Activated T-helper 1 cell treated with anti-CD3 and anti-CD28 coated beads, Interleukin-12 subunit alpha, Interleukin-12 subunit beta, Interleukin-2, Interleukin-4 antibody, amounts not matched to agents 30 ng/mL and 10 ng/mL and 1 ng/mL, durations not matched to agents 14 hours and 24 hours and 36 hours (primary cell): ENCODE measurements at regions of chr2 and their contacts with region 1.

Region 1: DNA sequence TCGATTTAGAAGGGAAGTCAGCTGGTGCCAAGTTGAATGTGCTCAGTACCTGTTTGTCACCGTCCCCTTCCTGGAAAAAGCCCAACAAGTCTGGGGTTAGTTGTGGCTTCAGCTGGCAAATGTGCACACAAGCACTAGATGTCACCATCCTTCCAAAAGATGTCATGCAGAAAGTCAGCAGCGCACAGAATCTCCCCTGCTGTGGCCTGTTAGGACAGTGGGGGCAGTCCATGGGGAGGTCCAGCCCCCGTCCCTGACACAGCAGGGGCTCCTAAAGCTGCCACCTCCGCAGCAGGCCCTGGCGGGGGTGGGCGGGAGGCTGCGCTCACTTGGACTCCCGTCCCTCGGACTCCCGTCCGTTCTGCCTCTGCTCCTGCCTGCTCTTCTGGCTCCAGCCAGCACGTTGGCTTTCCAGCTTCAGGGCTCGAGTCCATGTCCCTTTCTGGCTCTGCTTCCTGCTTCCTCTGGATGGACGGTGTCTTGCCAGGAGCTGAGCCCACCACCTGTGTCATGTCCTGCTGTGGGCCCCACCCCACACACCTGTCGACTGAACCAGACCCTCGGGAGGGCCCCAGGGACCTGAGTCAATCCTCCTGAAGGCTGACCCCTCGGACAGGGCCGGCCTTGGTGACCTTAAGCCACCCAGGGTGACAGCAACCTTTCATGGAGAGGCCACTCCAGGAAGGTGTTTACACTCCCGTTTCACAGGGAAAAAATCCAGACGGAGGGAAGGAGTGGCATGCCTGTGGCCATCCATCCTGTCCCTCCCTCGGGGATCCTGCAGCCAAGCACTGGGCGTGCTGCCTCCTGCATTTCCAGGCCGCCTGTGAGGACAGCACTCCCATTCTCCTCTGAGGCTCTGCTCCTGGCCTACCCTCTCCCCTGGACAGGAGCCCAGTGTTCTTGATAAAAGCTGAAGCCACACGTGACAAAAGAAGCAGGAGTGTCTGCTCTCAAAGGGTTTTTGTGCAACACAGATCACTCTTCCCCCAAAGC is 8.5 kb downstream of the RAB17 start:
- DNase-seq: no peak
- H3K4me3 Mint-ChIP-seq: no peak overlapping the region
- H3K27ac Mint-ChIP-seq: no peak overlapping the region
- H3K4me1 Mint-ChIP-seq: no peaks in the 10 kb centered on the region
- H3K27me3 Mint-ChIP-seq: peaks cover 4% of the 10 kb centered on the region

Region 2: DNA sequence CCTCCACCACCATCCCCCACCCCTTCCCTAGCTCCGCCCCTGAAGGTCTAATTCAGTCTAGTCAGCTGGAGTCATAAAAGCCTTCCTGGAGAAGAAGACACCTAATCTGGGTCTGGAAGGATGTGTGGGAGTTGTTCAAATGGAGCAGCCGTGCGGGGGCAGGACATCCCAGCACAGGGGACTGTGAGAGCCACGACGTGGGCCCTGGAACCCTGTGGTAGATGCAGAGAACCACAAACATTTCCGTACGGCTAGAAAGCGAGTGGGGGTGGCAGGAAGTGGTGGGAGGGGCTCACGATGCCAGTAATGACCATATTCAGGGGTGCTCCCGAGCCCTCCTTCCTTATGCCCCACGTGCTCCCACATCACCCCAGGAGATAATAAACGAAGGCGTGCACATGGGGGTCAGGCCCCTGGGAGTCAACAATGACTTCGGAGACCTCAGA is 147.2 kb before region 1 on chr2:
- intact Hi-C with region 1: no loop called
- DNase-seq: peak; percentile 62
- H3K4me3 Mint-ChIP-seq: peak overlapping the region; percentile 82
- H3K27ac Mint-ChIP-seq: peak overlapping the region; percentile 91
- H3K4me1 Mint-ChIP-seq: peaks cover 91% of the 10 kb centered on the region
- H3K27me3 Mint-ChIP-seq: peaks cover 5% of the 10 kb centered on the region

Region 3: GRCh38 chr2:237774802-237775553 is 192.9 kb after region 1 on chr2:
- intact Hi-C with region 1: loop called (anchors 1 kb)
- DNase-seq: peak; percentile 24
- H3K4me3 Mint-ChIP-seq: no peak overlapping the region
- H3K27ac Mint-ChIP-seq: no peak overlapping the region
- H3K4me1 Mint-ChIP-seq: no peaks in the 10 kb centered on the region
- H3K27me3 Mint-ChIP-seq: no peaks in the 10 kb centered on the region